ENCODE measurements at regions of chr2 and their contacts with region 1.

Region 1: DNA sequence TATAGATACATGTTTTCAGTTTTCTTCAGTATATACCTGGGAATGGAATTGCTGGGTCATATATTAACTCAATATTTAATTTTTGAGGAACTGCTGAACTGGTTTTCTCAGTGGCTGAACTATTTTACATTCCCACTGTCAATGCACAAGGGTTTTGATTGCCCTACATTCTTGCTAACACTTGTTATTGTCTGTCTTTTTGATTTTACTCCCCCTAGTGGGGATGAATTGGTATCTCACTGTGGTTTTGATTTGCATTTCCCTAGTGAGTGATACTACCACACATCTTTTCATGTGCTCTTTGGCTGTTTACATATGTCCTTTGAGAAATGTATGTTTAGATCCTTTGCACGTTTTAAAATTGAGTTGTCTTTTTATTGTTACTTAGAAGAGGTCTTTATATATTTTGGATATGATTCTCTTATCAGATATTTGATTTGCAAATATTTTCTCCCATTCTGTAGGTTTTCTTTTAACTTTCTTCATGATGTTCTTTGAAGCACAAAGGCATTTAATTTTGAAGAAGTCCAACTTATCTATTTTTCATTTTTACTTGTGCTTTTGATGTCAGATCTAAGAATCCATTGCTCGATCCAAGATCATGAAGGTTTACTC is 36.2 kb downstream of the ASB1 start:
- DNase-seq: no peak
- H3K4me3 Mint-ChIP-seq: no peak overlapping the region
- H3K27ac Mint-ChIP-seq: no peak overlapping the region
- H3K4me1 Mint-ChIP-seq: no peaks in the 10 kb centered on the region
- H3K27me3 Mint-ChIP-seq: peaks cover 7% of the 10 kb centered on the region

Region 2: DNA sequence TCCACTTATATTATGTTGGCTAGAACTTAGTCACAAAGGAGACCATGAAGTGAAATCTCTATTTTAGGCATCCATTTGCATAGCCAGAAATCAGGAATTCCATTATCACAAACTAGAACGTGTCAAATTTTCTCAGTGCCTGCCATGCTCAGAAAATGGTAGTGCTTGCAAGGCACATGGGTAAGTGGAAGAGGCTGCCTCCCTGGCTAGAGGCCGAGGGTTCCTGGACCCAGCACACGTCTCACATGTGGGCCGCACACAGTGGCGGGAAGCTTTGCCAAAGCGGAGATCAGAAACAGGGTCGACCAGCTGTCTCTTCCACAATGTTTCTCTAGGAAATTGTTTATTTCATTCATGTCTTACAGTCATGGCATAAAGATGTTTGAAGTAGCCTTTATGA is 100.3 kb before region 1 on chr2:
- intact Hi-C with region 1: loop called (anchors 1 kb)
- DNase-seq: no peak
- H3K4me3 Mint-ChIP-seq: no peak overlapping the region
- H3K27ac Mint-ChIP-seq: no peak overlapping the region
- H3K4me1 Mint-ChIP-seq: peaks cover 18% of the 10 kb centered on the region
- H3K27me3 Mint-ChIP-seq: no peaks in the 10 kb centered on the region

Region 3: GRCh38 chr2:238376884-238377391 is 86.0 kb before region 1 on chr2:
- intact Hi-C with region 1: no loop called
- DNase-seq: no peak
- H3K4me3 Mint-ChIP-seq: no peak overlapping the region
- H3K27ac Mint-ChIP-seq: no peak overlapping the region
- H3K4me1 Mint-ChIP-seq: peaks cover 8% of the 10 kb centered on the region
- H3K27me3 Mint-ChIP-seq: peaks cover 5% of the 10 kb centered on the region

Region 4: GRCh38 chr2:238438856-238439849 is 23.7 kb before region 1 on chr2:
- intact Hi-C with region 1: no loop called
- DNase-seq: no peak
- H3K4me3 Mint-ChIP-seq: peak overlapping the region; percentile 9
- H3K27ac Mint-ChIP-seq: peak overlapping the region; percentile 71
- H3K4me1 Mint-ChIP-seq: peaks cover 46% of the 10 kb centered on the region
- H3K27me3 Mint-ChIP-seq: no peaks in the 10 kb centered on the region

Measured in activated T-helper 1 cell treated with anti-CD3 and anti-CD28 coated beads, Interleukin-12 subunit alpha, Interleukin-12 subunit beta, Interleukin-2, Interleukin-4 antibody, amounts not matched to agents 30 ng/mL and 10 ng/mL and 1 ng/mL, durations not matched to agents 14 hours and 24 hours and 36 hours (primary cell).